CD14-positive monocyte (primary cell): ENCODE measurements at regions of chr22 and their contacts with region 1.

Region 1: DNA sequence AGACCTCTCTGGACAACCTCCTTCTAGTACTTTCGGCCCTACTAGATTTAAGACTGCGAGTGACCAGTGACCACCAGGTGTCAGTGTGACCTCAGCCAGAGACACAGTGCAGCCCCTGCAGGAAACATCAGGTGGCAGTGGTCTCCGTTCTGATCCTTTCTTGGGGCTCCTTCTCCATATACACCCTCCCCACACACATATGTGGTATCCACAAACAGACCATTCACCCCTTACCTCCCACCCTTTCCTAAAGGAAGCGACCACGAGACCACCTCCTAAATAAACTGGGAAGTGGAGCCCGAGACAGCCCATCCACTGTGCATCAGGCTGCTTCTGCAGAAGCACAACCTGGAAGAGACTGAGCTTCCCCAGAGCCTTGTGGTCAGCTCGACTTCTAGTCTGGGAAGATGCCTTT is 38.5 kb upstream of the CYP2D6 start:
- DNase-seq: peak; percentile 36 to 59 (median 47)
- H3K4me3 ChIP-seq: no peak overlapping the region
- H3K4me3 Mint-ChIP-seq: no peak overlapping the region
- H3K27ac ChIP-seq: no peak overlapping the region
- H3K27ac Mint-ChIP-seq: peak overlapping the region in 3 of 7 donors; percentile 11 to 61 (median 54)
- H3K4me1 ChIP-seq: no peaks in the 10 kb centered on the region
- H3K4me1 Mint-ChIP-seq: peaks cover 6% of the 10 kb centered on the region
- H3K27me3 ChIP-seq: no peaks in the 10 kb centered on the region
- H3K27me3 Mint-ChIP-seq: peaks cover 0 to 2% (median 0%) of the 10 kb centered on the region in 3 donors
- CTCF ChIP-seq: peak; percentile 93

Region 2: GRCh38 chr22:42313804-42314581 is 144.9 kb after region 1 on chr22:
- intact Hi-C with region 1: loop called in 1 of 2 experiments (anchors 5 kb)
- DNase-seq: peak; percentile 34 to 49 (median 44)
- H3K4me3 ChIP-seq: no peak overlapping the region
- H3K4me3 Mint-ChIP-seq: peak overlapping the region in 1 of 2 donors; percentile 57
- H3K27ac ChIP-seq: no peak overlapping the region
- H3K27ac Mint-ChIP-seq: peak overlapping the region in 1 of 7 donors; percentile 11
- H3K4me1 ChIP-seq: peaks cover 0 to 4% of the 10 kb centered on the region in 2 donors
- H3K4me1 Mint-ChIP-seq: peaks cover 8% of the 10 kb centered on the region
- H3K27me3 ChIP-seq: peaks cover 0 to 15% of the 10 kb centered on the region in 2 donors
- H3K27me3 Mint-ChIP-seq: peaks cover 18 to 27% (median 25%) of the 10 kb centered on the region in 3 donors
- CTCF ChIP-seq: peak; percentile 52

Region 3: DNA sequence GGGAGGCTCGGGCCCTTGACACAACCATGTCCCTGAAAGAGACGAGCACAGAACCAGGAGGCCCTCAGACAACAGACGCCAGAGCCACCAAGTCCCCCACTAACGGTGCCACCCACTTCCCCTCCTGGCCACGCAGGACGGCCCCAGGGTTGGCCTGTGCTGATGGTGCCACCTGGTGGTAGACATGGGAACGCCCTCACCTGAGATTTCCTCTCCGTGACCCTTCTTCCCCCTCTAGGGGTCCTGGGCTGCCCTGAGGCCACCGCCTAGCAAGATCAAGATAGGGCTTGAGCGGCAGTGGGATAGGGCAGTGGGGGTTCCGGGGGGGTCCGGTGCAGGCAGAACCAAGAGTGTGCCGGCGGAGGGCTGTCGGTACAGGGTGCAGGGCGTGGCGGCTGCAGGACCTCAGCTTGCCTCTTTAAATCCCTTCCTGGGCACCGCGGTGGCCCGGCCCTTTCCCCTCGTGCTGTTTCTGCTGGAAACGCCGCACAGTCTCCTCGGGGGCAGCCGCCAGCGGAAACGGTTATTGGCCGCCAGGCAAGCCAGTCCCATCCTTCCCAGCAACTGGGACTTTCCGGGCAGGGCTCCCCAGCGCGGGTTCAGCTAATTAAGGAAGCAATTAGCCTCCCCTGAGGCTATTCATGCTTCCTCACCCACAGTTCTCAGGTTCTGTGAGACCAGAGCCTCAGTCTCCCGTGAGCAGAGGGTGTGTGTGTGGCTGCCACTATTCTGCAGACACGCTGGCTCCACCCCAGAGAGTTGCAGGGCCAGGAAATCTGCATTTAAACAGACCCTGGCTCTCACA is 268.6 kb after region 1 on chr22:
- intact Hi-C with region 1: loop called in 1 of 2 experiments (anchors 2 kb)
- DNase-seq: peak; percentile 73 to 83 (median 82)
- H3K4me3 ChIP-seq: peak overlapping the region; percentile 22 to 79 (median 57)
- H3K4me3 Mint-ChIP-seq: peak overlapping the region; percentile 74 to 88
- H3K27ac ChIP-seq: peak overlapping the region; percentile 22 to 82
- H3K27ac Mint-ChIP-seq: peak overlapping the region; percentile 68 to 97 (median 90)
- H3K4me1 ChIP-seq: peaks cover 88 to 93% of the 10 kb centered on the region in 2 donors
- H3K4me1 Mint-ChIP-seq: peaks cover 82% of the 10 kb centered on the region
- H3K27me3 ChIP-seq: no peaks in the 10 kb centered on the region
- H3K27me3 Mint-ChIP-seq: peaks cover 0 to 13% (median 3%) of the 10 kb centered on the region in 3 donors
- CTCF ChIP-seq: peak; percentile 100

Region 4: DNA sequence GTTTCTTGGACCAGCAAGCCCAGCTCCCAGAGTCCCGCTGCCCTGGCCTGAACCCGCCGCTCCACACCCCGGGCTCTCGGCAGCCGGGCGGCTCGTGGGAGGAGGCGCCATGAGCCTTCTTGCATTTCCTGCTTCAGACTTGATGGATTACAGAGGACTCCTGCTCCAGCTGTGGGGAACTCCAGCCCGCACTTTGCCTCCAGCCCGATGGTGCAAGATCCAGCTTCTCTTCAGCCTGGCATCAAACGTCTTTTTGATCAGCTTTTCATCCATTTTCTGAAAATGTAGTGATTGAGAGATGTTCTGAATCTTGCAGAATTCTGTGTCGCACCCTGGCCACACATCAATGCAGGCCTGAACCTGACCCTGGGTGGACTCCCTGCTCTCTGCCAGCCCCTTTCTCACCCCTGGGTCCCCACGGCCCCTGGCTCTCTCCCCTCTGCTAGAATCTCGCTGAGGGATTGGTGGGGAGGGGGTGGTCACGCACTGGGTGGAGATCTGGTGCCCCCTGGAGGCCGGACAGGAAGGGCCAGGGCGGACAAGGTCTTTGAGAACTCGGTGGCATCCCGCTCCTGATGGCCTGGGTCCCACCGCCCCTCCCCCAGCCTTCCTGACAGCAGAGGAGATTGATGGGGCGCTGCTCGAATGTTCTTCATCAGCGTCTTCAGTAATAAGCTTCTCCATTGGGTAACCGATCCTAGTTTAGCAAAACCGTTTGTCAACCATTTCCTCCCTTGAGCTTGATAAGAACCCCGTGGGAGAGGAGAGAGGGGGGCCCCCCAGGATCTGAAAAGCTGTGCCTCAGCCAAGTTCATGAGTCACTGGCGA is 275.2 kb after region 1 on chr22:
- intact Hi-C with region 1: loop called (anchors 1 to 2 kb)
- DNase-seq: peak; percentile 85 to 88 (median 87)
- H3K4me3 ChIP-seq: peak overlapping the region; percentile 23 to 83 (median 54)
- H3K4me3 Mint-ChIP-seq: peak overlapping the region; percentile 77 to 83
- H3K27ac ChIP-seq: peak overlapping the region; percentile 84 to 95
- H3K27ac Mint-ChIP-seq: peak overlapping the region; percentile 81 to 95 (median 92)
- H3K4me1 ChIP-seq: peaks cover 42 to 45% of the 10 kb centered on the region in 2 donors
- H3K4me1 Mint-ChIP-seq: peaks cover 42% of the 10 kb centered on the region
- H3K27me3 ChIP-seq: no peaks in the 10 kb centered on the region
- H3K27me3 Mint-ChIP-seq: peaks cover 1 to 6% (median 3%) of the 10 kb centered on the region in 3 donors
- CTCF ChIP-seq: peak; percentile 89

Region 5: DNA sequence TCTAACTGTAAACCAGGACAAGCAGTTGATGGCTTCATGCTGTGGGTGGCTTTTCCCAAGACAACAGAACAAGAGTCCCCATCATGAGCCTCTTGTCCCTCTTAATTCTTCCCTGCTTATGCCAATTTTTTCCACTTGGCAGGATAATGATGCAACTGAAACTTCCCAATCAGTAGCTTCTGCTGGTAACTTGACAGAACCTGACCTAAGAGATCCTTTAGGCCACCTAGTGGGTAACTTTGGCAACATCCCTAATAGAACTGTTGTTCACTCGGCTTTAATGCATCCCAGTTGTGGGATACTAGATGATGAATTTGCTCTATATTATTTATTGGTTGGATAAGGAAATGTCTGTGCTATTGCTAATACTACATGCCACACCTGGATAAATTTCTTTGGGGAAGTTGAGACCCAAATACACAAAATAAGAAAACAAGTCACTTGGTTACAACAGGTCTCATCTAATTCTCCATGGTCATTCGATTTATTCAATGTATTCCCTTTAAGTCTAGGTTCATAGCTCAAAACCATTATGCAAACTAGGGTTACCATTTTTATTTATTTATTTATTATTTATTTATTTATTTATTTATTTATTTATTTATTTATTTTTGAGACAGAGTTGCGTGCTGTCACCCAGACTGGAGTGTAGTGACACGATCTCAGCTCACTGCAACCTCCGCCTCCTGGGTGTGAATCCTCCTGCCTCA is 304.6 kb after region 1 on chr22:
- intact Hi-C with region 1: loop called in 1 of 2 experiments (anchors 2 kb)
- DNase-seq: peak; percentile 35 to 65 (median 60)
- H3K4me3 ChIP-seq: no peak overlapping the region
- H3K4me3 Mint-ChIP-seq: no peak overlapping the region
- H3K27ac ChIP-seq: no peak overlapping the region
- H3K27ac Mint-ChIP-seq: no peak overlapping the region
- H3K4me1 ChIP-seq: no peaks in the 10 kb centered on the region
- H3K4me1 Mint-ChIP-seq: no peaks in the 10 kb centered on the region
- H3K27me3 ChIP-seq: no peaks in the 10 kb centered on the region
- H3K27me3 Mint-ChIP-seq: peaks cover 8 to 16% (median 13%) of the 10 kb centered on the region in 3 donors
- CTCF ChIP-seq: peak; percentile 82